ENCODE measurements at regions of chr5 and their contacts with region 1.

Region 1: GRCh38 chr5:69166686-69167492 is at the start of gene CCNB1:
- DNase-seq: peak; percentile 94
- ATAC-seq: peak; percentile 100
- H3K4me3 Mint-ChIP-seq: peak within 1 kb of the TSS; percentile 96
- H3K27ac Mint-ChIP-seq: peak within 1 kb of the TSS; percentile 89
- H3K4me1 Mint-ChIP-seq: peaks cover 23% of the 10 kb centered on the region
- H3K27me3 Mint-ChIP-seq: no peaks in the 10 kb centered on the region
- CTCF ChIP-seq: no peak
- total RNA-seq, gene CCNB1: 10.6 and 12.7 TPM in 2 replicates

Region 2: GRCh38 chr5:68054638-68055037 is 1112.3 kb before region 1 on chr5:
- CTCF ChIA-PET with region 1: no interaction called
- POLR2A ChIA-PET with region 1: no interaction called
- intact Hi-C with region 1: no loop called
- DNase-seq: no peak
- ATAC-seq: no peak
- H3K4me3 Mint-ChIP-seq: no peak overlapping the region
- H3K27ac Mint-ChIP-seq: no peak overlapping the region
- H3K4me1 Mint-ChIP-seq: no peaks in the 10 kb centered on the region
- H3K27me3 Mint-ChIP-seq: peaks cover 2% of the 10 kb centered on the region
- CTCF ChIP-seq: no peak

Region 3: DNA sequence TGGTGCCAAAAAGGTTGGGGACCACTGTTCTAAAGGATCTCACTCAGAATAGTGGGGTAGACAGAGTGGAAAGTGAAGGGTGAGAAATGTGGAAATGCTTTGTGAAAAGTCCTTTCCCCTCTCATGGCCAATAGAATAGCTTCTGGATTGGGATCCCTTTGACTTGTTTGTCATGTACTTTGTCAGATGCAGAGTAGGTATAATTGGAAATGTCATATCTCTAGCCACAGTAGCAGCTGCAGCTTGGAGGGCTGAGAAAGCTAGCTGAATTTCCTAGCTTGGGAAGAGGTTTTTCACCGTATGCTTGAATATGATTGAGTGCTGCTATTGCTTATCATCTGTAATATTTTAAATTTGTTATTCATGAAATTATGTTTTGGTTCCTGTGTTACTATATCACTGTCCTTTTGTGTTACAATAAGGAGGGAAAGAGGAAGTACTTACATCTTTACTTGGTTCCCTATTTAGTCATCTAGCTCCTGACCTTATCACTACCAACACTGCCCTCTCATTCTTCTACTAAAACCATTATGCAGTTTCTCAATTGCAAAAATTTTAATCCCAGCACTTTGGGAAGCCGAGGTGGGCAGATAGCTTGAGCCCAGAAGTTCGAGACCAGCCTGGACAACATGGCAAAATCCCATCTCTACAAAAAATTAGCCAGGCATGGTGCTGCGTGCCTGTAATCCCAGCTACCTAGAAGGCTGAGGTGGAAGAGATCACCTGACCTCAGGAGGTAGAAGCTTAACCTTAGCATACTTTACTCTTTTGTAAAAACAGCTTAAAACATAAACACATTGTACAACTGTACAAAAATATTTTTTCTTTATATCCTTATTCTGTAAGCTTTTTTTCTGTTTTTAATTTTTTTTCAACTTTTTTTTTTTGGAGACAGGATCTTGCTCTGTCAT is 60.6 kb before region 1 on chr5:
- CTCF ChIA-PET with region 1: no interaction called
- POLR2A ChIA-PET with region 1: interaction called, 6 read pairs
- intact Hi-C with region 1: loop called (anchors 1 kb)
- DNase-seq: no peak
- ATAC-seq: peak; percentile 97
- H3K4me3 Mint-ChIP-seq: no peak overlapping the region
- H3K27ac Mint-ChIP-seq: peak overlapping the region; percentile 79
- H3K4me1 Mint-ChIP-seq: peaks cover 14% of the 10 kb centered on the region
- H3K27me3 Mint-ChIP-seq: no peaks in the 10 kb centered on the region
- CTCF ChIP-seq: no peak

Region 4: DNA sequence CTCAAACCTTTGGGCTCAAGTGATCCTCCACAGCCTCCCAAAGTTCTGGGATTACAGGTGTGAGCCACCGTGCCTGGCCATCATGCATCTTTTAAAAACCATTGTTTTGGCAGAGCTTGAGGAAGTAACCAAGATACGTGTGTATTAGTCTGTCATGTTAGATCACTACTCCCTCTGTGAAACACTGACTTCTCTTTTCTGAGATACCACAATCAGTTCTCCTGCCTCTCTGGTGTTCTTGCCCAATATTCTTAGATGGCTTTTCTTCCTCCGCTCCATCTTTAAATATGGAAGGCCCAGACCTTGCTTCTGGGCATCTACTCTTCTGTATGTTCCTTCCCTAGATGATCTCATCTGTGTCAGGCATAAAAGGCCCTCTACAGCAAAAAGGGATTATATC is 14.2 kb before region 1 on chr5:
- CTCF ChIA-PET with region 1: no interaction called
- POLR2A ChIA-PET with region 1: no interaction called
- intact Hi-C with region 1: no loop called
- DNase-seq: no peak
- ATAC-seq: no peak
- H3K4me3 Mint-ChIP-seq: no peak overlapping the region
- H3K27ac Mint-ChIP-seq: no peak overlapping the region
- H3K4me1 Mint-ChIP-seq: no peaks in the 10 kb centered on the region
- H3K27me3 Mint-ChIP-seq: no peaks in the 10 kb centered on the region
- CTCF ChIP-seq: no peak

Region 5: GRCh38 chr5:69189162-69190086 is 22.5 kb after region 1 on chr5 and contains the start of gene CENPH:
- CTCF ChIA-PET with region 1: no interaction called
- POLR2A ChIA-PET with region 1: interaction called, 10 read pairs
- intact Hi-C with region 1: loop called (anchors 1 kb)
- DNase-seq: peak; percentile 88
- ATAC-seq: peak; percentile 92
- H3K4me3 Mint-ChIP-seq: peak within 1 kb of the TSS; percentile 92
- H3K27ac Mint-ChIP-seq: peak within 1 kb of the TSS; percentile 90
- H3K4me1 Mint-ChIP-seq: peaks cover 14% of the 10 kb centered on the region
- H3K27me3 Mint-ChIP-seq: no peaks in the 10 kb centered on the region
- CTCF ChIP-seq: no peak
- total RNA-seq, gene CENPH: 13.0 and 13.5 TPM in 2 replicates

Region 6: DNA sequence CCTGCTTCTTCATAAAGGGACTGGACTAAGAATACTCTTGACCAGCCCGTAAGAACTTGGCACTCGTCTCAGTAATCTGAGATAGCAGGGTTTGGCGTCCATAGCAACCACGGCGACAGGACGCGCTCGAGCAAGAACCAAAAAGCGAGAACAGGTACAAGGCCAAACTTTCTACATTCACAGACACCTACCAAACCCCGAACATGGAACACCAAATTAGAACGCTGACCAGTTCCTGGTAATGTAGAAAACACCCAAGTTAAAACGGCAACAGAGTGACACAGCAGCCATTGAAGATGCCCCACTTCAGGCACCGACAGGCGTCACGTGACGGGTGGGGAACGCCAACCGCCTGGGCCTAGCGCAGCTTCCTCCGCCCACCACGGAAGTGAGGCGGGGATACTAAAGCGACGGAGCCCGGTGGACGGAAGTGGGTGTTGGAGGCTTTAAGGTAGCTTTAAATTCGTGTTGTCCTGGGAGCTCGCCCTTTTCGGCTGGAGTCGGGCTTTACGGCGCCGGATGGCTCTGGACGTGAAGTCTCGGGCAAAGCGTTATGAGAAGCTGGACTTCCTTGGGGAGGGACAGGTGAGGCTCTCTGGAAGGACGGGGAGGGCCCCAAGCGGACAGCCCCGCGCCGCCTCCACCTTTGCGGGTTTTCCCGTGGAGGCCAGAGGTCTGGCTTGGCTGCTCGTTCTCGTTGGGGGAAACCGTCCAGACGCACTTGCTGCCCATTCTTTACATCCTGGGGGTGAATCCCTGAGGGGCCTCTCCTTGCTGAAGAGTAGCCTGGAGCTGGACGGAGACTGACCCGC is 67.8 kb after region 1 on chr5 and contains the start of gene CDK7:
- CTCF ChIA-PET with region 1: no interaction called
- POLR2A ChIA-PET with region 1: interaction called, 4 read pairs
- intact Hi-C with region 1: loop called (anchors 1 kb)
- DNase-seq: peak; percentile 88
- ATAC-seq: peak; percentile 100
- H3K4me3 Mint-ChIP-seq: peak within 1 kb of the TSS; percentile 97
- H3K27ac Mint-ChIP-seq: peak within 1 kb of the TSS; percentile 88
- H3K4me1 Mint-ChIP-seq: peaks cover 35% of the 10 kb centered on the region
- H3K27me3 Mint-ChIP-seq: no peaks in the 10 kb centered on the region
- CTCF ChIP-seq: no peak
- total RNA-seq, gene CDK7: 27.1 and 33.5 TPM in 2 replicates

Region 7: DNA sequence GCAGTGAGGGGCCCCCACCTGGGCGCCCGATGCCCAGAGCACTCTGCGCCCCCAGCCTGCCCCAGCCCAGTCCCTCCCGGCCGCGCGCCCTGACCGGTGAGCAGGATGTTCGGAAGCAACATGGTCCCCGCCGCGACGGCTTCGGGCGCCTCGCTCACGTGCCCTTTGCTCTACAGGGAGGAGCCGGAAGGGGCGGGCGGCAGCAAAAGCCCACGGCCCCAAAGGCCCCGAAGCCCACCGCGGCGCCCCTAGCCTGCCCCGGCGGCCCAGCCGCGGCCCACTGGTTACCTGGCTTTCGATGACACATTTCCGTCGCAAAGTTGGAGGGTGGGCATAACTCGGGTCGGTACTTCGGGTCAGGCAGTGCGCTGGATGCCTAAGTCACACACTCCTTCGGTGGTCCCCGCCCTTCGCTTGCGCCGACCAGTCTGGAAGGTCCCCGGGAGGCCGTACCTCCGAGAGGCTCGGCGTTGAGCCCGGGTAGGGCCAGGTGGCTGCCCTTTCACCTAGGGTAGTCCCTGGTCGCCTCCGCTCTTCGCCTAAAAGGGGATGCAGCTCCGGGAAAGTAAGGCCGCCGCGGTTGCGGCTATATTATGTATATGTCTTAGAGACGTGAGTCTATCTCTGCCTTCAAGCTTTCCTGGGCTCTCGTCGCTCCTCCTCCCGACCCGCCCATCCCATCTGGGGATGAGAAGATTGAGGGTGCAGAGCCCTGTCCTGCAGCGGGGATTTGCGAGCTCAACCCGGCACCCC is 202.7 kb after region 1 on chr5 and contains the starts of genes AK6, RAD17 and TAF9:
- CTCF ChIA-PET with region 1: no interaction called
- POLR2A ChIA-PET with region 1: no interaction called
- intact Hi-C with region 1: loop called (anchors 1 kb)
- DNase-seq: peak; percentile 93
- ATAC-seq: peak; percentile 94
- H3K4me3 Mint-ChIP-seq: peak within 1 kb of the TSS; percentile 97
- H3K27ac Mint-ChIP-seq: peak within 1 kb of the TSS; percentile 98
- H3K4me1 Mint-ChIP-seq: peaks cover 53% of the 10 kb centered on the region
- H3K27me3 Mint-ChIP-seq: no peaks in the 10 kb centered on the region
- CTCF ChIP-seq: no peak
- total RNA-seq, gene AK6: 38.6 and 39.3 TPM in 2 replicates
- total RNA-seq, gene RAD17: 25.9 and 30.6 TPM in 2 replicates
- total RNA-seq, gene TAF9: 44.7 and 45.4 TPM in 2 replicates

Measured in activated B cell treated with CpG ODN at 0.5 μM for 24 hours (primary cell).